Activated CD4-positive, alpha-beta memory T cell treated with anti-CD3 and anti-CD28 coated beads for 36 hours (primary cell): ENCODE measurements at regions of chr14 and their contacts with region 1.

Region 1: GRCh38 chr14:64503478-64504309 is at the start of gene ZBTB25:
- DNase-seq: peak; percentile 95
- H3K4me3 Mint-ChIP-seq: peak within 1 kb of the TSS; percentile 95
- H3K27ac Mint-ChIP-seq: peak within 1 kb of the TSS; percentile 100
- H3K4me1 Mint-ChIP-seq: peaks cover 53% of the 10 kb centered on the region
- H3K27me3 Mint-ChIP-seq: no peaks in the 10 kb centered on the region
- total RNA-seq, gene ZBTB25: 24.2 to 27.5 TPM

Region 2: GRCh38 chr14:63470962-63471793 is 1032.5 kb before region 1 on chr14:
- CTCF ChIA-PET with region 1: no interaction called
- POLR2A ChIA-PET with region 1: no interaction called
- intact Hi-C with region 1: loop called (anchors 10 kb)
- DNase-seq: no peak
- H3K4me3 Mint-ChIP-seq: no peak overlapping the region
- H3K27ac Mint-ChIP-seq: no peak overlapping the region
- H3K4me1 Mint-ChIP-seq: peaks cover 49% of the 10 kb centered on the region
- H3K27me3 Mint-ChIP-seq: no peaks in the 10 kb centered on the region

Region 3: GRCh38 chr14:63867933-63868921 is 635.5 kb before region 1 on chr14:
- CTCF ChIA-PET with region 1: no interaction called
- POLR2A ChIA-PET with region 1: no interaction called
- intact Hi-C with region 1: loop called (anchors 2 kb)
- DNase-seq: peak; percentile 24
- H3K4me3 Mint-ChIP-seq: peak overlapping the region; percentile 48
- H3K27ac Mint-ChIP-seq: peak overlapping the region; percentile 49
- H3K4me1 Mint-ChIP-seq: peaks cover 59% of the 10 kb centered on the region
- H3K27me3 Mint-ChIP-seq: no peaks in the 10 kb centered on the region

Region 4: DNA sequence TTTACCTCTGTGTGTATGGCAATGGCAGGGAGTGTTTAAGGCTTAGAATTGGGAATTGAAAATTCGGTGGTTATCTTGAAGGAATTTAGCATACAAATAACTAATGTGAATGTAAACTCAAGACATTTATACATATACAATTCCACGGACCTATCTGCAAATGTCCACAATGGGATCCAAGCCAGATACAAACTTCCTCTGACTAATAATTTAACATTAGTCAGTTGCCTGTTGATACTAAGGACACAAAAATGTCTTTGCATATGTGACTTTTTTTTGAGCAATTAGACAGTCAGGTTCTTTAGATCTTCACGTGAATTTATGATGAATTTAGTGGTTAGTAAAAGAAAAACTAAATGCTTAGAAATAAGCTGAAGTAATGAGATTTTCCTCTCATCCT is 250.0 kb before region 1 on chr14:
- CTCF ChIA-PET with region 1: no interaction called
- POLR2A ChIA-PET with region 1: no interaction called
- intact Hi-C with region 1: no loop called
- DNase-seq: no peak
- H3K4me3 Mint-ChIP-seq: no peak overlapping the region
- H3K27ac Mint-ChIP-seq: no peak overlapping the region
- H3K4me1 Mint-ChIP-seq: no peaks in the 10 kb centered on the region
- H3K27me3 Mint-ChIP-seq: no peaks in the 10 kb centered on the region

Region 5: GRCh38 chr14:64369201-64369600 is 134.5 kb before region 1 on chr14:
- CTCF ChIA-PET with region 1: no interaction called
- POLR2A ChIA-PET with region 1: no interaction called
- intact Hi-C with region 1: no loop called
- DNase-seq: no peak
- H3K4me3 Mint-ChIP-seq: no peak overlapping the region
- H3K27ac Mint-ChIP-seq: no peak overlapping the region
- H3K4me1 Mint-ChIP-seq: no peaks in the 10 kb centered on the region
- H3K27me3 Mint-ChIP-seq: no peaks in the 10 kb centered on the region

Region 6: GRCh38 chr14:64387694-64388532 is 115.8 kb before region 1 on chr14 and contains the start of gene MTHFD1:
- CTCF ChIA-PET with region 1: no interaction called
- POLR2A ChIA-PET with region 1: interaction called, 7 read pairs
- intact Hi-C with region 1: loop called (anchors 2 kb)
- DNase-seq: peak; percentile 98
- H3K4me3 Mint-ChIP-seq: peak within 1 kb of the TSS; percentile 99
- H3K27ac Mint-ChIP-seq: peak within 1 kb of the TSS; percentile 95
- H3K4me1 Mint-ChIP-seq: peaks cover 33% of the 10 kb centered on the region
- H3K27me3 Mint-ChIP-seq: peaks cover 3% of the 10 kb centered on the region
- total RNA-seq, gene MTHFD1: 212 to 221 TPM

Region 7: GRCh38 chr14:64465191-64465822 is 38.4 kb before region 1 on chr14 and contains the start of gene AKAP5:
- CTCF ChIA-PET with region 1: no interaction called
- POLR2A ChIA-PET with region 1: interaction called, 7 read pairs
- intact Hi-C with region 1: loop called (anchors 1 kb)
- DNase-seq: peak; percentile 69
- H3K4me3 Mint-ChIP-seq: peak within 1 kb of the TSS; percentile 75
- H3K27ac Mint-ChIP-seq: peak within 1 kb of the TSS; percentile 3
- H3K4me1 Mint-ChIP-seq: peaks cover 37% of the 10 kb centered on the region
- H3K27me3 Mint-ChIP-seq: no peaks in the 10 kb centered on the region
- total RNA-seq, gene AKAP5: 0.74 to 1.1 TPM

Region 8: GRCh38 chr14:64540208-64541157 is 36.8 kb after region 1 on chr14 and contains the start of gene HSPA2:
- CTCF ChIA-PET with region 1: interaction called, 16 read pairs
- POLR2A ChIA-PET with region 1: interaction called, 16 read pairs
- intact Hi-C with region 1: loop called (anchors 1 kb)
- DNase-seq: peak; percentile 98
- H3K4me3 Mint-ChIP-seq: peak within 1 kb of the TSS; percentile 89
- H3K27ac Mint-ChIP-seq: peak within 1 kb of the TSS; percentile 84
- H3K4me1 Mint-ChIP-seq: peaks cover 35% of the 10 kb centered on the region
- H3K27me3 Mint-ChIP-seq: peaks cover 24% of the 10 kb centered on the region
- total RNA-seq, gene HSPA2: 6.6 to 6.7 TPM

Region 9: GRCh38 chr14:64550621-64551333 is 47.1 kb after region 1 on chr14:
- CTCF ChIA-PET with region 1: no interaction called
- POLR2A ChIA-PET with region 1: no interaction called
- intact Hi-C with region 1: no loop called
- DNase-seq: no peak
- H3K4me3 Mint-ChIP-seq: no peak overlapping the region
- H3K27ac Mint-ChIP-seq: no peak overlapping the region
- H3K4me1 Mint-ChIP-seq: peaks cover 11% of the 10 kb centered on the region
- H3K27me3 Mint-ChIP-seq: peaks cover 9% of the 10 kb centered on the region

Region 10: DNA sequence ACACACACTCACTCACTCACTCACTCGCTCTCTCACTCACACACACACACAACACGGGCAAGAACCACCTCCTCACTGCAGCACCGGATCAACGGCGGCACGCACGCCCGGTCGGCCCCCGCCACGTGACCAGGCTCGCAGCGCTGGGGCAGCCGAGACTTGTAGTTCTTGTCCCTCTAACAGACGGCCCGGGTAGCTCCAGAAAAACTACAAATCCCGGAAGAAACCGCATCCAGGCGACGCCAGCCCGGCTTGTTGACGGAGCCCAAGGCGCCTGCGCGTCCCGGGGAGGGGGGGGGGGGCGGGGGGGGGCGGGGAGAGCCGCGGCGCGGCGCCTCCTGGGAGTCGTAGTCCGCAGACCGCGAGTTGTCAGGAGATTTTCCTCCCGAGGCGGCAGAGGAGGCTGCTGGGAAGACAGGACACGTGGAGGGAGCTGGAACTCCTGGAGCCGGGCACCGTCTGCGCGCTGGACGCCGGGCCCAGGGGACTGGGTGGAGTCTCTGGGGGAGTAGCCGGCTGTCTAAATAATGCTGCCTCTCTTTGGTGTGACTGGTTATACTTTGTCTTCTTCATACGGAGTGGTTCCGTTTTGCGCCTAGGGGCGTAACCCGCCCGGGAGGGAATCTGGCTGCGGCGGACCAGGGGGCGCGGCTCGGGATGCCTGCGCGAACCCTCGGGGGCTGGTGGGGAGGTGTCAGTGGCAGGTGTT is 598.9 kb after region 1 on chr14 and contains the start of gene MAX:
- CTCF ChIA-PET with region 1: no interaction called
- POLR2A ChIA-PET with region 1: no interaction called
- intact Hi-C with region 1: loop called (anchors 2 kb)
- DNase-seq: peak; percentile 99
- H3K4me3 Mint-ChIP-seq: peak within 1 kb of the TSS; percentile 96
- H3K27ac Mint-ChIP-seq: peak within 1 kb of the TSS; percentile 93
- H3K4me1 Mint-ChIP-seq: peaks cover 34% of the 10 kb centered on the region
- H3K27me3 Mint-ChIP-seq: no peaks in the 10 kb centered on the region
- total RNA-seq, gene MAX: 74.5 to 80.7 TPM